HCT116 (cell line): ENCODE measurements at regions of chr3 and their contacts with region 1.

Region 1: GRCh38 chr3:69120879-69121464 is 1.4 kb downstream of the LMOD3 start:
- DNase-seq: peak; percentile 86
- ATAC-seq: peak; percentile 92
- H3K4me3 ChIP-seq: no peak overlapping the region
- H3K27ac ChIP-seq: no peak overlapping the region
- H3K4me1 ChIP-seq: peaks cover 0 to 16% of the 10 kb centered on the region in 2 experiments; a peak in 3 of 4 replicates
- H3K27me3 ChIP-seq: no peaks in the 10 kb centered on the region
- CTCF ChIP-seq: peak; percentile 61 to 94 (median 92)
- POLR2A ChIP-seq: no peak
- RAD21 ChIP-seq: peak; percentile 83

Region 2: DNA sequence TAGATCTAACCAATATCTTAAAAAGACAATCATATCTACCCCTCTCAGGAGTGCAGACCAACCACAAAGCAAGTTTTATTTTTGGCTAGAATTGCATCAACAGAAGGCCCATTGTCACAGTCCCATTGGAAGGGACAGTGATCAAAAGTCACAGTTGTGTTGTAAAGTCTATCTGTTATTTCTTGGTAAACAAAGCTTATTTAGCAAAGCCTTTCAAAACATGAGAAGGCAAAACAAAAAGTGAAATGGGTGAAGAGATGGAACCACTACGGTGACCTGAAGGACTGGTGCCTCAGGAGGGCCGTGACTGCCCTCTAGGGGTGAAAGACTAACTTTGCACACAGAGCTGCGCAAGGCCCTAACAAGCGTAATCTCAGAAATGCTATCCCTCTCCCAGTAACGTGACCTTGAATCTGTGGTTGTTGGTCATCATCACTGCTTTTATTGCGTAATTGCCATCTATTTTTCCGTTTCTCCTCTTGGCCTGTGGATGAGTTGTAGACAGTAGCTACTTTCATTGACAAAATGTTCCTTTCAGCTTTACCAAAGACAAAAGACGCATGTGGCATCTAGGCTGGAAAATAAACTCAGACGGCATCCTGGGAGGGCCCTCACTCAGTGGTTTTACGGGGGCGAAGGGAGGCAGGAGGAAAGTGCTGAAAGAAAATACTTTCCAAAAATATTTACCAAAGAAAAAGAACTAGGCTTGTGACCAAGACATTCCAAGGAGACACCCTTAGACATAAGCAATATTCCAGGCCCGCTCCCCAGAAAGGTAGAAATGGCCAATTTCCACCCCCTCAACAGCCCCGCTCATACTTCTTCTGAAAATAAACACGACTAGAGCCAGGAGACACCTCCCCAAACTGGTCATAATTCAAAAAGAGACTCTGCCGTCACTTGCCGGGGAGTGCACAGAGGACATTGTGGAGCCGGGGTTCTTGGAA is 185.5 kb after region 1 on chr3:
- CTCF ChIA-PET with region 1: interaction called, 15 read pairs
- POLR2A ChIA-PET with region 1: no interaction called
- RAD21 ChIA-PET with region 1: interaction called in 1 of 2 experiments, 6 read pairs
- intact Hi-C with region 1: loop called (anchors 1 kb)
- DNase-seq: peak; percentile 59
- ATAC-seq: peak; percentile 99
- H3K4me3 ChIP-seq: no peak overlapping the region
- H3K27ac ChIP-seq: no peak overlapping the region
- H3K4me1 ChIP-seq: 0 out of 4 replicates have a peak, but pooled peaks cover 0 to 3% of the 10 kb centered on the region in 2 experiments
- H3K27me3 ChIP-seq: no peaks in the 10 kb centered on the region
- CTCF ChIP-seq: peak; percentile 80 to 93 (median 89)
- POLR2A ChIP-seq: no peak
- RAD21 ChIP-seq: peak; percentile 91

Region 3: GRCh38 chr3:69425261-69425660 is 304.3 kb after region 1 on chr3:
- CTCF ChIA-PET with region 1: interaction called, 10 read pairs
- POLR2A ChIA-PET with region 1: no interaction called
- RAD21 ChIA-PET with region 1: no interaction called
- intact Hi-C with region 1: loop called (anchors 1 kb)
- DNase-seq: peak; percentile 21
- ATAC-seq: peak; percentile 82
- H3K4me3 ChIP-seq: no peak overlapping the region
- H3K27ac ChIP-seq: no peak overlapping the region
- H3K4me1 ChIP-seq: peaks cover 0 to 4% of the 10 kb centered on the region in 2 experiments; a peak in 1 of 4 replicates
- H3K27me3 ChIP-seq: no peaks in the 10 kb centered on the region
- CTCF ChIP-seq: peak; percentile 34 to 60 (median 56); a peak in 5 of 6 replicates
- POLR2A ChIP-seq: no peak
- RAD21 ChIP-seq: peak; percentile 60

Region 4: GRCh38 chr3:69671082-69671952 is 550.3 kb after region 1 on chr3:
- CTCF ChIA-PET with region 1: interaction called, 4 read pairs
- POLR2A ChIA-PET with region 1: no interaction called
- RAD21 ChIA-PET with region 1: no interaction called
- intact Hi-C with region 1: loop called (anchors 2 kb)
- DNase-seq: peak; percentile 15
- ATAC-seq: peak; percentile 47; the same call in 1 of the 2 replicates
- H3K4me3 ChIP-seq: no peak overlapping the region
- H3K27ac ChIP-seq: no peak overlapping the region
- H3K4me1 ChIP-seq: no peaks in the 10 kb centered on the region
- H3K27me3 ChIP-seq: no peaks in the 10 kb centered on the region
- CTCF ChIP-seq: peak; percentile 38 to 73 (median 49); a peak in 5 of 6 replicates
- POLR2A ChIP-seq: no peak
- RAD21 ChIP-seq: peak; percentile 67

Region 5: DNA sequence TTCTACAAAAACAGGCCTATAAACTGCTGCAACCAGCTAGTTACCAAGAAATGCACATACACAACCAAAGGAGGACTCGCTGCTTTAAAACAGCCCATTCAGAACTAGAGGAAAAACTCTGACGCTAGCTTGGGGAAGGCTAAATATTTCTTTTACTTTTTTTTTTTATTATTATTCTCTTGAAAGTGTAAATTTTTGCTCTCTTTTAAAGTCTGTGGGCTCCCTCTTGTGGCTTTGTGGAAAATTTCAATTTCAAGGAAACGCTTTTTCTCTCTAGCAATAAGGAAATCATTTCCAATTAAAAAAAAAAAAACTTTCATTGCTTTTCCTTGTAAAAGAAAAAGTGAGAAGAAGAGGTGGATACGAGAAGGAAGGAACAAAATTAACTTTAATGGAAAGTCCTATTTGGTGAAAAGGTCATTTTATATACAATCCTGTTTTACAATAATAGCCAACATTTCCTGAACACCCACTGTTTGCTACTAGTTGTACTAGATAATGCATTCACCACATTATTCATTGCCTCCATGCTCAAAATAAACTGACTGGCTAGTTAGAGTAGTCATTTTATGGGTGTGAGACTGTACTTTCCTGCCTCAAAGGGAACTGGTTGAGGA is 827.4 kb after region 1 on chr3:
- CTCF ChIA-PET with region 1: no interaction called
- POLR2A ChIA-PET with region 1: no interaction called
- RAD21 ChIA-PET with region 1: no interaction called
- intact Hi-C with region 1: loop called (anchors 5 kb)
- DNase-seq: peak; percentile 6
- ATAC-seq: no peak
- H3K4me3 ChIP-seq: no peak overlapping the region
- H3K27ac ChIP-seq: no peak overlapping the region
- H3K4me1 ChIP-seq: no peaks in the 10 kb centered on the region
- H3K27me3 ChIP-seq: no peaks in the 10 kb centered on the region
- CTCF ChIP-seq: peak; percentile 37 to 48 (median 44); a peak in 5 of 6 replicates
- POLR2A ChIP-seq: no peak
- RAD21 ChIP-seq: peak; percentile 49